Caco-2 (cell line): ENCODE measurements at regions of chr4 and their contacts with region 1.

Region 1: GRCh38 chr4:155675709-155676429 is 9.2 kb downstream of the GUCY1A1 start:
- DNase-seq: peak; percentile 34 to 40
- H3K4me3 ChIP-seq: no peak overlapping the region
- H3K4me3 Mint-ChIP-seq: no peak overlapping the region
- H3K27ac Mint-ChIP-seq: peak overlapping the region; percentile 60
- H3K4me1 ChIP-seq: peaks cover 45% of the 10 kb centered on the region
- H3K4me1 Mint-ChIP-seq: peaks cover 43% of the 10 kb centered on the region
- H3K27me3 ChIP-seq: no peaks in the 10 kb centered on the region
- H3K27me3 Mint-ChIP-seq: no peaks in the 10 kb centered on the region
- CTCF ChIP-seq: no peak

Region 2: DNA sequence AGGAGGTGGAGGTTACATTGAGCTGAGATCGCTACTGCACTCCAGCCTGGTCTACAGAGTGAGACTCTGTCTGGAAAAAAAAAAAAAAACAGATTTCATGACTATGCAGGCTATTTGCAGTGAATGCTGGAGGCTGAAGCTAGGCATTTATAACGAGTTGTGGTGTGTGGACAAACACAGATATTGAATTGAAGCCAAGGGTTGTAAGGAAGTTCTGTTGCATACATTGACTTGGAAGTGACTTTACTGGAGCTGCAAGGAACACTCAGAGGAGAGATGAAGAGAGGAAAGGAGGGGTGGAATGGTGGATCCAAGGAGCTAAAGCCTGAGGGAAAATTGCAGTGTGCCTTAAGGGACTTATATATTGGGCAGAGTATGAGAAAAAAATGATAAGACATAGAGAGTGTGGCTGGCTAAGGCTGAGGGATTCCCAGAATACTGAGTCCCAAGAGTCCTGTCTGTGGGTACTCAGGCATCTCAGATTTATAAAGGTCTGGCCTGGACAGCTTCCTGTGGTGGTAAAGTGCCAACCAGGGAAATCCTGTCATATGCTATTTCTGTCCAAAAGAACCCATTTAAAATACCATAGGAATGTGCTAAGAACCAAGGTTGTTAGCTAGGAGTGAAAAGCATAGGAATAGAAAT is 97.0 kb before region 1 on chr4:
- CTCF ChIA-PET with region 1: no interaction called
- POLR2A ChIA-PET with region 1: no interaction called
- intact Hi-C with region 1: loop called (anchors 1 kb)
- DNase-seq: no peak
- H3K4me3 ChIP-seq: no peak overlapping the region
- H3K4me3 Mint-ChIP-seq: no peak overlapping the region
- H3K27ac Mint-ChIP-seq: no peak overlapping the region
- H3K4me1 ChIP-seq: peaks cover 10% of the 10 kb centered on the region; the same call in 1 of the 2 replicates
- H3K4me1 Mint-ChIP-seq: no peaks in the 10 kb centered on the region
- H3K27me3 ChIP-seq: no peaks in the 10 kb centered on the region
- H3K27me3 Mint-ChIP-seq: no peaks in the 10 kb centered on the region
- CTCF ChIP-seq: no peak

Region 3: DNA sequence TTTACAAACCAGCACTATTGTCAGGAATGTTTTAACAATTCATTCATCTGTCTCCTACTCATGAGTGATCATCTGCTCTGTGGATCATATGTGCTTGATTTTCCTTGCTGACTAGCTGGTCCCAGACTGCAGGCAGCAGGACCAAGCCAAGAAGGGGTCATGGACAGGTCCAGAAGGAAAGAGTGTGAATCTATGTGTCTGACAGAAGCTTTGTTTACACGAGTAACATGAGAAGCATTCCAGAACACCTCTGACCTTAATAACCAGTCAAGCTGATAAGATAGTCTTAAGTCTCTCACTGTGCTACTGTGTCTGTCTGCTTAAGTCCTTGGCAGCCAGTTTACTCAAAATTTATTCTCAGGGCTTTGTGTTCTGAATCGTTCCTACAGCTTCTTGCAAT is 29.8 kb after region 1 on chr4:
- CTCF ChIA-PET with region 1: no interaction called
- POLR2A ChIA-PET with region 1: no interaction called
- intact Hi-C with region 1: loop called (anchors 1 kb)
- DNase-seq: peak; percentile 57 to 65
- H3K4me3 ChIP-seq: no peak overlapping the region
- H3K4me3 Mint-ChIP-seq: peak overlapping the region; percentile 29
- H3K27ac Mint-ChIP-seq: peak overlapping the region; percentile 36
- H3K4me1 ChIP-seq: peaks cover 38% of the 10 kb centered on the region
- H3K4me1 Mint-ChIP-seq: peaks cover 22% of the 10 kb centered on the region
- H3K27me3 ChIP-seq: no peaks in the 10 kb centered on the region
- H3K27me3 Mint-ChIP-seq: no peaks in the 10 kb centered on the region
- CTCF ChIP-seq: no peak

Region 4: DNA sequence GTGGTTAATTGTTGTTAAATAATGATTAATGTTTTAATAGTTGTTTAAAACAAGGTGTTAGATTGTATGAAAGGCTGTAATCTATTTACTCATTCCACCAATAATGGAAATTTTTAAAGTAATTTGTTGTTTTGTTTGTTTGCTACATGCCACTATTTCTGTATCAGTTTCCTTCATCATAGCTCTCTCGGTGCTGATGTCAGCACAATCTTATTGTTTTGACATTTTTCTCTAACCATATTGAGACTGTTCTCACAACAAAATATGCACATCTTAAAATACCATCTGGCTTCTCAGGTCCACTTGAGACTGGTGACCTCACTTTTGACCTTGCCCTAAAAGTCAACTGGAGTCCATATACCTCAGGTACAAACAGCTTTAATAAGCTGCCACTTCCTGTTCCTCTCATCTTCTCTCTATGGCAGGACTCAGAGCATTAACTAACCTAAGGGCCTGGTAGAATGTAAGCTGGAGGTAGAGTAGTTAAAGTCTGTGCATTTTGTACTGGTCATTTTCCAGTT is 81.9 kb after region 1 on chr4:
- CTCF ChIA-PET with region 1: no interaction called
- POLR2A ChIA-PET with region 1: no interaction called
- intact Hi-C with region 1: no loop called
- DNase-seq: no peak
- H3K4me3 ChIP-seq: no peak overlapping the region
- H3K4me3 Mint-ChIP-seq: no peak overlapping the region
- H3K27ac Mint-ChIP-seq: no peak overlapping the region
- H3K4me1 ChIP-seq: no peaks in the 10 kb centered on the region
- H3K4me1 Mint-ChIP-seq: no peaks in the 10 kb centered on the region
- H3K27me3 ChIP-seq: no peaks in the 10 kb centered on the region
- H3K27me3 Mint-ChIP-seq: no peaks in the 10 kb centered on the region
- CTCF ChIP-seq: no peak

Region 5: GRCh38 chr4:155828628-155829027 is 152.8 kb after region 1 on chr4:
- CTCF ChIA-PET with region 1: no interaction called
- POLR2A ChIA-PET with region 1: no interaction called
- intact Hi-C with region 1: no loop called
- DNase-seq: no peak
- H3K4me3 ChIP-seq: no peak overlapping the region
- H3K4me3 Mint-ChIP-seq: no peak overlapping the region
- H3K27ac Mint-ChIP-seq: no peak overlapping the region
- H3K4me1 ChIP-seq: peaks cover 29% of the 10 kb centered on the region
- H3K4me1 Mint-ChIP-seq: peaks cover 29% of the 10 kb centered on the region
- H3K27me3 ChIP-seq: no peaks in the 10 kb centered on the region
- H3K27me3 Mint-ChIP-seq: no peaks in the 10 kb centered on the region
- CTCF ChIP-seq: no peak